AG04450 (cell line): ENCODE measurements at regions of chr5 and their contacts with region 1.

Region 1: GRCh38 chr5:132839426-132840301 is 9.2 kb upstream of the SHROOM1 start:
- DNase-seq: peak; percentile 41
- H3K4me3 ChIP-seq: no peak overlapping the region
- H3K27ac ChIP-seq: peak overlapping the region; percentile 95
- H3K27me3 ChIP-seq: no peaks in the 10 kb centered on the region
- CTCF ChIP-seq: no peak

Region 2: DNA sequence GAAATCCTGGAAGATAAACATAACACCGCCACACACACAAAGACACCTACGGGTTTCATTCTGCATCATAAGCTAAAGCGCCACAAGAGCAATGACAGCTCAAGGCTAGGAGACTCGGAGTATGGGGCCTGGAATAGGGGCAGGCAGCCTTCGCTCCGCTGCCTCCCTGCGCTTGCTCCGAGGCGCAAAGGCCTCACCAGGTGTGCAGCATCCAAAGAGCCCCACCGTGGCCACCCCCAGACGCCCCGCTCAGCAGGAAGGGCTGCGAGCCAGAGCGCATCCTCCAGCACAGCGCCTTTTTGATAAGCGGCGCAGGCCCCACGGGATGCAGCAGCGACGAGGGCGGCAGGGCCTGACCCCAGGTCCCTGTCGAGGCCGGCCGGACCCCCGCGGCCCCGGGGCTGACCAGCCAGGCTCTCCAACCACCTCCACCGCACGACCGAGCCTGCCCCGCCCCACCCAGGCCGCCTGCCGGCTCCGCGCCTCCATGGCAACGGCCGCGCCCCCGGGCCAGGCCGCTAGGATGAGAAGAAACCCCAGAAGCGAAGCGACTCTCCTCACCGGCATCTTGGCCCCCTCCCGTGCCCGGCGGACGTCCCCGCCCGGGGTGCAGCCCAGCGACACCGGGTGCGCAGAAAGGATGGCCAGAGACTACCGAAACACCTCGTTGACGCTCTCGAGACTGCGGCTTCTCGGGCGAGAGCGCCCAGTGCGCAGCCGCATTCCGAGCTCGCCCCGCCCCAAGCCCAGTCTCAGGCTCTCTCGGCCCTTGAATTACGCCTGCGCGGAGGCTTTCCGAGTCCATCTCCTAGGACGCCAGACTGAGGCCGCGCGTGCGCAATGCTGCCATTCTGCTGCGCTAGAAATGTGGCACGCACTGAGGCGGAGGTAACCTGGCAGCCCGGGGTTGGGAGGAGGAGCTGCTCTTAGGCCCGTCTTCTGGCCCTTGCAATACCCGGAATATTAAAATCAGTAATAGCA is 102.5 kb before region 1 on chr5 and contains the start of gene KIF3A:
- CTCF ChIA-PET with region 1: no interaction called
- POLR2A ChIA-PET with region 1: no interaction called
- DNase-seq: peak; percentile 78
- H3K4me3 ChIP-seq: peak within 1 kb of the TSS; percentile 91
- H3K27ac ChIP-seq: peak within 1 kb of the TSS; percentile 24
- H3K27me3 ChIP-seq: peaks cover 1% of the 10 kb centered on the region
- CTCF ChIP-seq: no peak
- polyA plus RNA-seq, gene KIF3A: 6.7 and 8.9 TPM in 2 replicates

Region 3: DNA sequence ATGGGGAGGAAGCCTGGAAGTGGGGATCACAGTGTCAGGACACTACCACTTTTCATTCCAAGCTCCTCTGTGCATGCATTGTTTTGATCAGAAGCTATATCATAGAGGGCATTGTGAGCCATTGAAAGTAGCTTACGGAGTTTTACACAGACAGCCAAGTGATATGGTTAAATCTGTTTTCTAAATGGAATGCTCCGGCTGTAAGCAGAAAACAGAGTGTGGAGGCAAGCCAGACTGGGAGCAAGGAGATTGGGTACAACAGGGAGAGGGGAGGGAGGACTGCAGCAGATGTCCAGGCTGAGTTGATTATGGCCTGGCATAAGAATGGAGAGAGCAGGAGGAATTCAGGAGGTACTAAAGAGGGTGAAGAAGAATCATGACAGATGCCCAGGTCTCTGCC is 42.0 kb before region 1 on chr5:
- CTCF ChIA-PET with region 1: no interaction called
- POLR2A ChIA-PET with region 1: no interaction called
- DNase-seq: no peak
- H3K4me3 ChIP-seq: no peak overlapping the region
- H3K27ac ChIP-seq: no peak overlapping the region
- H3K27me3 ChIP-seq: peaks cover 27% of the 10 kb centered on the region
- CTCF ChIP-seq: no peak

Region 4: DNA sequence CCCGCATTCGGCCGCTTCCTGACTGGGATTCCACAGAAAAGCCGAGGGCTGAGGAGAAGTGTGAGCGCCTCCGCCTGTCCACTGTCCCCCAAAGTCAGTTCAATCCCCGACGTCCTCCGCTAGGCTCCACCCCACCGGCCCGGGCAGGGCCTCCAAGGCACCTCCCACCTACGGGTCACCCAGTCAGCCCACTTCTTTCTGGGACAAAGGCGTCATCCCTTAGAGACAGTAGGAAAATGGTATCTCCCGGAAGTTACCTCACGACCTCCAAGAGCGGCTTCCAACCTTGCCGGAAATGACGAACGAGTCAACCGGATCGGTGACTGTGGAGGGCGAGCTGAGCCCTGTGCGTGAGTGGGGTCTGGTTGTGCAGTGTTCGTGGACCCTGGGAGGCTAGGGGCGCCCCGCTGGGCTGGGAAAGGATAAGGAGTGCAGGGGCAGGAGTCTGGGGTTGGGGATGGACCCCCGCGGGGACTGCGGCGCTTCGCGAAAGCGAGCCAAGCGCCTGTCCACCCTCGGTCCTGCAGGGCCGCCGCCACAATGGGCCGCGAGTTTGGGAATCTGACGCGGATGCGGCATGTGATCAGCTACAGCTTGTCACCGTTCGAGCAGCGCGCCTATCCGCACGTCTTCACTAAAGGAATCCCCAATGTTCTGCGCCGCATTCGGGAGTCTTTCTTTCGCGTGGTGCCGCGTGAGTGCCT is 26.8 kb after region 1 on chr5 and contains the starts of genes GDF9 and UQCRQ:
- CTCF ChIA-PET with region 1: no interaction called
- POLR2A ChIA-PET with region 1: interaction called, 10 read pairs
- DNase-seq: peak; percentile 99
- H3K4me3 ChIP-seq: peak within 1 kb of the TSS; percentile 97
- H3K27ac ChIP-seq: peak within 1 kb of the TSS; percentile 94
- H3K27me3 ChIP-seq: no peaks in the 10 kb centered on the region
- CTCF ChIP-seq: peak; percentile 42
- polyA plus RNA-seq, gene GDF9: 0.14 and 0.15 TPM in 2 replicates
- polyA plus RNA-seq, gene UQCRQ: 318 and 329 TPM in 2 replicates

Region 5: GRCh38 chr5:132915681-132916080 is 76.0 kb after region 1 on chr5:
- CTCF ChIA-PET with region 1: no interaction called
- POLR2A ChIA-PET with region 1: no interaction called
- DNase-seq: no peak
- H3K4me3 ChIP-seq: no peak overlapping the region
- H3K27ac ChIP-seq: no peak overlapping the region
- H3K27me3 ChIP-seq: no peaks in the 10 kb centered on the region
- CTCF ChIP-seq: no peak

Region 6: GRCh38 chr5:132979367-132979940 is 139.8 kb after region 1 on chr5:
- CTCF ChIA-PET with region 1: no interaction called
- POLR2A ChIA-PET with region 1: no interaction called
- DNase-seq: no peak
- H3K4me3 ChIP-seq: no peak overlapping the region
- H3K27ac ChIP-seq: no peak overlapping the region
- H3K27me3 ChIP-seq: no peaks in the 10 kb centered on the region
- CTCF ChIP-seq: no peak